ENCODE measurements at regions of chr4 and their contacts with region 1.

Region 1: DNA sequence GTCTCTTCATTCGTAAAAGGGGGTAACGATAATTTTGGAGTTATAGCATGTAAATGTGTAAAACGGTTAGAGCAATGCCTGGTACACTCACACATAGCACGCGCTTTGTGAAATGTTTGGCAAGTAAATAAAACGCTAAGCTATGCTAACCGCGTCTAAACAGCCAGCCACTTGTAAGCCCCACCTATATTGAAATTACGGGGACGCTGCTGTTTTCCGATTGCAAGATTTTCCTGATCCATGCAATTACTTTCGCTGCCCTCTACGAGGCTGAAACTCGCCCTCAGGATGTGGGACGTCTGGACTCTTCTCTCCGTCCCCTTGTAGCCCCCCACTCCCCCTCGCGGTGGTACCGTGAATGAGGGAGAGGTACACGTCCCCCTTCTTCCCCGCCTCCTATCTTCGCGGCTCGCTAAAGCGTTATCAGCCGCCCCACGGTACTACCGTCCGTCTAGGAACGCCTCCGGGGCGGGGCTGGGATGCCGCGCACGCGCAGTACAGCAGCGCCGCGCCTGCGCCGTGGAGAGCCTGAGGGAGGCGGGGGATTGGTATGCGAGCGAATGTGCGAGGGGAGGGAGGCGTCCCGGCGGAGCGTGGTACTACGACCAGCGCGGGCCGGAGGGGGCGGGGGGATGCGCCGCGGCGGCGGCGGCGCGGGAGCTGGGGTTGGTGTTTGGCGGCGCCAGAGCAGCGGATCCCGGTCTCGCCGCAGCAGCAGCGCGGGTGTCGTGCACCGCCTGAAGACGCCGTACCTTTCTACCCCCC is at the start of gene STIM2:
- DNase-seq: peak; percentile 96 to 99 (median 97)
- ATAC-seq: peak; percentile 93 to 96 (median 94)
- H3K4me3 ChIP-seq: peak within 1 kb of the TSS; percentile 61 to 93 (median 82)
- H3K27ac ChIP-seq: peak within 1 kb of the TSS; percentile 56 to 97 (median 94)
- H3K4me1 ChIP-seq: peaks cover 0 to 63% (median 39%) of the 10 kb centered on the region in 12 donors
- H3K27me3 ChIP-seq: no peaks in the 10 kb centered on the region
- CTCF ChIP-seq: peak in 10 of 12 donors; percentile 12 to 55 (median 32)
- POLR2A ChIP-seq: peak in 1 of 2 donors; percentile 94
- total RNA-seq, gene STIM2: 7.5 to 17.3 (median 9.9) TPM

Region 2: DNA sequence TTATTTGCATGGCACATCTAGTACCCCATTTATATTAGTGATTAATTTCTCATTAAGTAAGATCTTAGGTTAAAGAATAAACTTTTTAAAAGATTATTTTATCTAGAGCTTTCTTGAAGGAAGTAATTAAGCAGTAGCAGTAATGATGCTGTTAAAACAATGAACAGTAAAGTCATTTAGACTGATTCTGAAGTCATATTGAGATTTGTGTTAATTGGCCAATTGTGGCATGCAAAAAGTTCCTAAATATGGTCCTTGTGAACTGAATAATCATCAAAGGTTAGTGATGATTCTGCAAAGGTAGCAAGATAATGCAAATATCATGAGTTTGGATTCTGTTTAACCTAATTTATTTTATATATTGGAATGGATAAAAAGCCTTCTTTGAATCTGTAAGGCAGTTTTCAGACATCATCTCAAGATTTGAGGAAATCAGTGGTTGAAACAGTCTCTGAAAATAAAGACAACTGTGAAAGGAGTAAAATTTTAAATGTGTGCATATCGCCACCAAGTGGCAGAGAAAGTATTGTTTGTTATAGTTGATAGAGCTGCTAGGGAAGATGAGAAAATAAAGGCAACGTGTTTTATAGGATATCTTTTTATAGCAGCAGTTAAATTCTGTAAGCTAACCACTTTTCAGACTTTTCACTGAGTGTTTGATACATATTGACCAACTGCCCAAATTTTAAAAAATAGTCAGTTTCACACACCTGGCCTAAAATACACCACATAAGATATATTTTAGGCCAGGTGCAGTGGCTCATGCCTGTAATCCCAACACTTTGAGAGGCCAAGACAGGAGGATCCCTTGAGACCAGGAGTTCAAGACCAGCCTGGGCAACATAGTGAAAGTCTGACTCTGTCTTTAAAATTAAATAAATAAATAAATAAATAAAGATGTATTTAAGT is 449.7 kb before region 1 on chr4:
- intact Hi-C with region 1: loop called in 1 of 10 experiments (anchors 5 kb)
- DNase-seq: peak in 1 of 5 donors; percentile 30
- ATAC-seq: peak in 1 of 4 donors; percentile 66
- H3K4me3 ChIP-seq: no peak overlapping the region
- H3K27ac ChIP-seq: no peak overlapping the region
- H3K4me1 ChIP-seq: peaks cover 0 to 21% (median 16%) of the 10 kb centered on the region in 12 donors
- H3K27me3 ChIP-seq: no peaks in the 10 kb centered on the region
- CTCF ChIP-seq: peak; percentile 42 to 78 (median 70)
- POLR2A ChIP-seq: no peak

Region 3: GRCh38 chr4:26753617-26754016 is 106.7 kb before region 1 on chr4:
- intact Hi-C with region 1: loop called in 2 of 10 experiments (anchors 5 kb)
- DNase-seq: peak in 4 of 5 donors; percentile 46 to 76 (median 59)
- ATAC-seq: peak; percentile 94 to 99 (median 98)
- H3K4me3 ChIP-seq: no peak overlapping the region
- H3K27ac ChIP-seq: peak overlapping the region in 4 of 12 donors; percentile 21 to 56 (median 32)
- H3K4me1 ChIP-seq: peaks cover 0 to 17% (median 7%) of the 10 kb centered on the region in 12 donors
- H3K27me3 ChIP-seq: no peaks in the 10 kb centered on the region
- CTCF ChIP-seq: no peak
- POLR2A ChIP-seq: no peak

Region 4: GRCh38 chr4:26819478-26820095 is 40.8 kb before region 1 on chr4:
- intact Hi-C with region 1: loop called in 6 of 10 experiments (anchors 2 to 5 kb)
- DNase-seq: no peak
- ATAC-seq: no peak
- H3K4me3 ChIP-seq: no peak overlapping the region
- H3K27ac ChIP-seq: no peak overlapping the region
- H3K4me1 ChIP-seq: peaks cover 0 to 26% (median 8%) of the 10 kb centered on the region in 12 donors
- H3K27me3 ChIP-seq: no peaks in the 10 kb centered on the region
- CTCF ChIP-seq: no peak
- POLR2A ChIP-seq: no peak

Region 5: DNA sequence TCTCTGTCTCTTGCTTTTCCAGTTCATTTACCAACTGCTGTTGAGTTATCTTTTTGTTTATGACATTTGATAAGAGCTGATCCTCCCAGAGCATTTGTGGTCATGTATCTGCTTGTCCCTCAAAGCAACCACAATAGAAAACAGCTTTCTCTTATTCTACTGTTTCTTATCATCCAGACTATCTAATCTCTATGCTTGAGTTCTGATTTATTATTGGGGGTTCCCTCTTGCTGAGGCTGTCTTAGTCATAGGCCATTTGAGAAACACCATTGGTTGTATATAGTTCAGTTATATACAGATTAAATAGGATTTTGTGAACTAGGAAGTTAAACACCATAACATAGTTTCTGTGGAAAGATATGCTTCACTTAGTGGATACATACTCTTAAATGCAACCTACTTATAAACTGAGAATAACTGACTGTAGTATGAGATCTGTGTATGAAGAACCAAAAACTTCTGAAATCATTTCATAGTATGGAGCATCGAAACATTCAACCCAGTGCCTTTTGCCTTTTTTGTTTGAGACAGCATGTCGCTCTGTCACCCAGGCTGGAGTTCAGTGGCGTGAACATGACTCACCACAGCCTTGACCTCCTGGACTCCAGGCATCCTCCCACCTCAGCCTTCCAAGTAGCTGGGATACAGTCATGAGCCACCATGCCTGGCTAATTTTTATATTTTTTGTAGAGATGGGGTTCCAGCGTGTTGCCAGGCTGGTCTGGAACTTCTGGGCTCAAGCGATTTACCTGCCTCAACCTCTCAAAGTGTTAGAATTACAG is 76.1 kb after region 1 on chr4:
- intact Hi-C with region 1: no loop called
- DNase-seq: no peak
- ATAC-seq: no peak
- H3K4me3 ChIP-seq: no peak overlapping the region
- H3K27ac ChIP-seq: no peak overlapping the region
- H3K4me1 ChIP-seq: peaks cover 0 to 28% (median 2%) of the 10 kb centered on the region in 12 donors
- H3K27me3 ChIP-seq: no peaks in the 10 kb centered on the region
- CTCF ChIP-seq: no peak
- POLR2A ChIP-seq: no peak

Region 6: DNA sequence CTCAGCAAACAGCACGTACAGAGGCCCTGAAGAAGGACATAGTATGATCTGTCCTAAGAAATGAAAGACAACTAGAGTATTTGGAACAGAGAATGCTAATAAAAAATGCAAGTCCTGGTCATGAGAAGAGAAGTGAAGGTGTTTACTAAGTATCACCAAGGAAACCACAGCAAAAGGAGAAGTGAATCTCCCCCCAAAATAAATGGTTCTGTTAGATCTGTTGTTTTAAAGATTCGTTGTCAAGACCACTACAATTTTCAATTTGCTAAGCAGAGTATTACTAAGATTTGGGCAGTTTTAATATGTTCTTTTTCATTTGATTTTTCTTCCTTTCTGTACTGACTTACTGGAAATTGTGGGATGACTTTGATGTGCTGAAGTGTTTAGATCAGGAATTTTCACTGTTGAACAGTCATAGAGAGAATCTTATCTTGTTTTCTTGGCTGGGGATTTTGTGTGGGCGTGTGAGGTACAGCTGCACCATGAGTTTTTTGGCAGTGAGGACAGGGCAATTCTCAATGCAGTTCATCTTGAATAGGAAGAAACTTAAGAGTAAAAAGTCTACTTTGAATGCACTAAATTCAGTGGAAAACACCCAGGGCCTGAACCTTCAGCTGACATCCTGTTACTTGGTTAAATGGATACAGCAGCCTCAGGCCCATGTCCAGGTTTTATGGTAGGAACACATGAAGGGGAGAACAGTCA is 132.5 kb after region 1 on chr4:
- intact Hi-C with region 1: loop called in 3 of 10 experiments (anchors 5 kb)
- DNase-seq: peak in 4 of 5 donors; percentile 34 to 55 (median 40)
- ATAC-seq: peak; percentile 75 to 92 (median 89)
- H3K4me3 ChIP-seq: no peak overlapping the region
- H3K27ac ChIP-seq: peak overlapping the region in 9 of 12 donors; percentile 12 to 47 (median 32)
- H3K4me1 ChIP-seq: peaks cover 0 to 34% (median 24%) of the 10 kb centered on the region in 12 donors
- H3K27me3 ChIP-seq: no peaks in the 10 kb centered on the region
- CTCF ChIP-seq: no peak
- POLR2A ChIP-seq: no peak

Region 7: GRCh38 chr4:27474691-27475090 is 614.4 kb after region 1 on chr4:
- intact Hi-C with region 1: no loop called
- DNase-seq: no peak
- ATAC-seq: no peak
- H3K4me3 ChIP-seq: no peak overlapping the region
- H3K27ac ChIP-seq: no peak overlapping the region
- H3K4me1 ChIP-seq: no peaks in the 10 kb centered on the region
- H3K27me3 ChIP-seq: no peaks in the 10 kb centered on the region
- CTCF ChIP-seq: no peak
- POLR2A ChIP-seq: no peak